Activated CD4-positive, alpha-beta T cell treated with anti-CD3 and anti-CD28 coated beads for 36 hours (primary cell): ENCODE measurements at regions of chr14 and their contacts with region 1.

Region 1: DNA sequence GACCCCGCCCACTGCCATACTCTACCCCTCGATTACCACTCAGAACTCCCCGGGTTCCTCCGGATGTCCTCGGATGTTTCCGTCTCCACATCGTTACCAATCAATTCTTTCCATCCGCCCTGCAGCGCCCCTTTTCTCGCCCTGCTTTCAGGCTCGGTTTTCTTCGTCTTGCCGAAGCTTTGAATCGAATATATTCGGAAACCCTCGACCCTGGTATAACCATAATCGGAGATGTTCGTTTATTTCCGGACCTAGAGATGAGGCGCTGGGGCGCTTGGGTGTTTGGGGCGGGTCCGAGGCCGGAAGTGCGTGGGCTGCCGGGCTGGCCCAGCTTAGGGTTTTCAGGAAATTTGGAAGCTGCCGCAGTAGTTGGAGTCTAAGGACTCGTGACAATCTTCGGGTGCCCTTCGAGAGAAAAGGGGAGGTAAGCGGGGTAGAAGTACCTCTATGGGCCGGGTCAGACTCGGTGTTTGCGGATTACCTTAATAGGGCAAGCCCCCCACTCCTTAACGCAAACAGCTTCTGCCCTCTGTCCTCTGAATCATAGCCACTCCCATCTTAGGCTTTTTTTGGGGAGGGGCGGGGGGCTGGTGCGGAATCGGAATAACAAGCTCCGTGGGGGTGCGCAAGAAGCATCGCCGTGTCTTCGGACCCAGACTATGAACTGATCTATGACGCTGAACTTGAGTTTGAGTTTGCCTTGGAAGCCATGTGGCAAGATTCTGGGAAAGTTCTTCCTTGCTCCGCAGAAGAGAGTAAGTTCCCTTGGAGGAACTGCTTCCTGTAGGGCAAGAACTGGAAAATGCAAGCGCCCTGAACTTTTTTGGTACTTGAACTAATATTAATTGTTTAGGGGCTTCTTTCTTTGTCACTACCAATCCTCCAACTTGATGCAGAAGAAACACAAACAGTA is at the start of gene C14orf119:
- DNase-seq: peak; percentile 100
- ATAC-seq: peak; percentile 93
- H3K4me3 Mint-ChIP-seq: no peak within 1 kb of the TSS
- H3K27ac Mint-ChIP-seq: no peak within 1 kb of the TSS
- H3K4me1 Mint-ChIP-seq: peaks cover 19% of the 10 kb centered on the region
- H3K27me3 Mint-ChIP-seq: no peaks in the 10 kb centered on the region
- total RNA-seq, gene C14orf119: 43.8 to 51.5 TPM

Region 2: GRCh38 chr14:21269252-21270046 is 1826.0 kb before region 1 on chr14 and contains the start of gene HNRNPC:
- CTCF ChIA-PET with region 1: no interaction called
- POLR2A ChIA-PET with region 1: interaction called, 4 read pairs
- intact Hi-C with region 1: loop called in 1 of 2 experiments (anchors 10 kb)
- DNase-seq: peak; percentile 100
- ATAC-seq: peak; percentile 89
- H3K4me3 Mint-ChIP-seq: peak within 1 kb of the TSS; percentile 93
- H3K27ac Mint-ChIP-seq: peak within 1 kb of the TSS; percentile 100
- H3K4me1 Mint-ChIP-seq: peaks cover 25% of the 10 kb centered on the region
- H3K27me3 Mint-ChIP-seq: no peaks in the 10 kb centered on the region
- total RNA-seq, gene HNRNPC: 1,155 to 1,665 TPM

Region 3: GRCh38 chr14:22918804-22919600 is 176.4 kb before region 1 on chr14 and contains the start of gene RBM23:
- CTCF ChIA-PET with region 1: interaction called, 5 read pairs
- POLR2A ChIA-PET with region 1: no interaction called
- intact Hi-C with region 1: loop called in 1 of 2 experiments (anchors 1 kb)
- DNase-seq: peak; percentile 100
- ATAC-seq: peak; percentile 97
- H3K4me3 Mint-ChIP-seq: peak within 1 kb of the TSS; percentile 92
- H3K27ac Mint-ChIP-seq: peak within 1 kb of the TSS; percentile 99
- H3K4me1 Mint-ChIP-seq: peaks cover 40% of the 10 kb centered on the region
- H3K27me3 Mint-ChIP-seq: no peaks in the 10 kb centered on the region
- total RNA-seq, gene RBM23: 61.6 to 68.6 TPM

Region 4: GRCh38 chr14:23006544-23007419 is 88.7 kb before region 1 on chr14:
- CTCF ChIA-PET with region 1: interaction called, 9 read pairs
- POLR2A ChIA-PET with region 1: interaction called, 16 read pairs
- intact Hi-C with region 1: loop called in 1 of 2 experiments (anchors 1 kb)
- DNase-seq: peak; percentile 98
- ATAC-seq: peak; percentile 98
- H3K4me3 Mint-ChIP-seq: peak overlapping the region; percentile 95
- H3K27ac Mint-ChIP-seq: peak overlapping the region; percentile 99
- H3K4me1 Mint-ChIP-seq: peaks cover 45% of the 10 kb centered on the region
- H3K27me3 Mint-ChIP-seq: no peaks in the 10 kb centered on the region

Region 5: GRCh38 chr14:23076785-23077408 is 18.6 kb before region 1 on chr14:
- CTCF ChIA-PET with region 1: interaction called, 58 read pairs
- POLR2A ChIA-PET with region 1: interaction called, 27 read pairs
- intact Hi-C with region 1: no loop called
- DNase-seq: peak; percentile 46
- ATAC-seq: peak; percentile 59
- H3K4me3 Mint-ChIP-seq: no peak overlapping the region
- H3K27ac Mint-ChIP-seq: peak overlapping the region; percentile 17
- H3K4me1 Mint-ChIP-seq: peaks cover 5% of the 10 kb centered on the region
- H3K27me3 Mint-ChIP-seq: no peaks in the 10 kb centered on the region

Region 6: DNA sequence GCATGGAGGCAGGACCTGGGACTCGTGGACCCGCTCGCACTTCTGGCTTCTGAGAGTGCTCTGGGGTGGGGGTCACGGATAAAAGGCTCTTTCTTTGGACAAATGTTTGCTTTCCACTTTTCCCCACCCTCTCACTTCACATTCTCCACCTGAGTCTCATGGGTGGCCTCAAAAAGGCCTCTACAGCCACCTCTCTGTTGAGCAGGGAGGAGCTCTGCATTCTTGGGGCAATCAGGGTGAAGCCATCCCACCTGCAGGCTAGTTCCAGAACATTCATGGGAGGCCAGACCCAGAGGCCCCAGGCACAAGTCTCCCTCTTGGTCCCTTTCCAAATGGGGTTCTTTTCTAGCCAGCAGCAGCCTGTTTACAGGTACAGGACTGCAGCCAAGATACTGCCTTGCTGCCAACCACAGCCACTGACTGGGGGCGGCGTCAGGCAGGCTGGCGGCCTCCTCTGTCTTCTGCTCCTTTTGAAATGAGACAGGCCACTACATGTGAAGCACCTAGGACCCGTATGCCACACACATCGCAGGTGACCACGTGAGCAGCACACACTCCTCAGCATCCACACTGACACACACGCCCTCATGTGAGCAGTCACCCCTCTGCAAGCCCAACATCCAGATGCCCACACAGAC is 41.9 kb after region 1 on chr14:
- CTCF ChIA-PET with region 1: no interaction called
- POLR2A ChIA-PET with region 1: no interaction called
- intact Hi-C with region 1: no loop called
- DNase-seq: no peak
- ATAC-seq: no peak
- H3K4me3 Mint-ChIP-seq: no peak overlapping the region
- H3K27ac Mint-ChIP-seq: no peak overlapping the region
- H3K4me1 Mint-ChIP-seq: no peaks in the 10 kb centered on the region
- H3K27me3 Mint-ChIP-seq: no peaks in the 10 kb centered on the region

Region 7: DNA sequence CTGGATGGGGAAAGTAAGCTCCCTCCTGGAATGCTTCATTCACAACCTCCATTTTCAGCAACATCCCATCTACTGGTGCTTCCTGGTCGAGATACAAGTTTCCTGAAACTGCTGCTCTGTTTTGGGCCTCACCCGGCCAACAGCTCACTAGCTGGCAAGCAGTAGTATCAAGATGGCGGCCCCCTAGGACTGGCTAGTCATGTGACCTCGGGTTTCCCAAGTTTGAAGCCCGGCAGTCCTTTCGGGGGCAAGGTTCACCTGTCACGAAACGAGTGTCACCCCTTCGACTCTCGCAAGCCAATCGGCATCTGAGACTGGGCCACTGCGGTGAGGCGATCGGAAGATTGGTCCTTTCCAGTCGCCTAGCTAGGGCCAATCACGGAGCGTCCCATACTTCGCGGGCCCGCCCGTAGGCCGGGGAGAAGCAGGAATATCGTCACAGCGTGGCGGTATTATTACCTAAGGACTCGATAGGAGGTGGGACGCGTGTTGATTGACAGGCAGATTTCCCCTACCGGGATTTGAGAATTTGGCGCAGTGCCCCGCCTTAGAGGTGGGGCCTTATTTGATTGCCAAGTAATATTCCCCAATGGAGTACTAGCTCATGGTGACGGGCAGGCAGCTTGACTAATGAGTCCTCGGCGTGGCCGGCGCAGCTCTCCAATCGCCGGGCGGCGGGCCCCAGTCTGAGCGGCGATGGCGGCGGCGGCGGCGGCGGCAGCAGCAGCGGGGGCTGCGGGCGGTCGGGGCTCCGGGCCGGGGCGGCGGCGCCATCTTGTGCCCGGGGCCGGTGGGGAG is 225.5 kb after region 1 on chr14 and contains the start of gene PABPN1:
- CTCF ChIA-PET with region 1: interaction called, 3 read pairs
- POLR2A ChIA-PET with region 1: interaction called, 14 read pairs
- intact Hi-C with region 1: loop called in 1 of 2 experiments (anchors 1 kb)
- DNase-seq: peak; percentile 98
- ATAC-seq: peak; percentile 91
- H3K4me3 Mint-ChIP-seq: peak within 1 kb of the TSS; percentile 93
- H3K27ac Mint-ChIP-seq: peak within 1 kb of the TSS; percentile 95
- H3K4me1 Mint-ChIP-seq: peaks cover 25% of the 10 kb centered on the region
- H3K27me3 Mint-ChIP-seq: no peaks in the 10 kb centered on the region
- total RNA-seq, gene PABPN1: 237 to 338 TPM

Region 8: GRCh38 chr14:23569443-23570151 is 474.1 kb after region 1 on chr14:
- CTCF ChIA-PET with region 1: no interaction called
- POLR2A ChIA-PET with region 1: no interaction called
- intact Hi-C with region 1: no loop called
- DNase-seq: no peak
- ATAC-seq: peak; percentile 9
- H3K4me3 Mint-ChIP-seq: no peak overlapping the region
- H3K27ac Mint-ChIP-seq: no peak overlapping the region
- H3K4me1 Mint-ChIP-seq: peaks cover 19% of the 10 kb centered on the region
- H3K27me3 Mint-ChIP-seq: peaks cover 12% of the 10 kb centered on the region

Region 9: DNA sequence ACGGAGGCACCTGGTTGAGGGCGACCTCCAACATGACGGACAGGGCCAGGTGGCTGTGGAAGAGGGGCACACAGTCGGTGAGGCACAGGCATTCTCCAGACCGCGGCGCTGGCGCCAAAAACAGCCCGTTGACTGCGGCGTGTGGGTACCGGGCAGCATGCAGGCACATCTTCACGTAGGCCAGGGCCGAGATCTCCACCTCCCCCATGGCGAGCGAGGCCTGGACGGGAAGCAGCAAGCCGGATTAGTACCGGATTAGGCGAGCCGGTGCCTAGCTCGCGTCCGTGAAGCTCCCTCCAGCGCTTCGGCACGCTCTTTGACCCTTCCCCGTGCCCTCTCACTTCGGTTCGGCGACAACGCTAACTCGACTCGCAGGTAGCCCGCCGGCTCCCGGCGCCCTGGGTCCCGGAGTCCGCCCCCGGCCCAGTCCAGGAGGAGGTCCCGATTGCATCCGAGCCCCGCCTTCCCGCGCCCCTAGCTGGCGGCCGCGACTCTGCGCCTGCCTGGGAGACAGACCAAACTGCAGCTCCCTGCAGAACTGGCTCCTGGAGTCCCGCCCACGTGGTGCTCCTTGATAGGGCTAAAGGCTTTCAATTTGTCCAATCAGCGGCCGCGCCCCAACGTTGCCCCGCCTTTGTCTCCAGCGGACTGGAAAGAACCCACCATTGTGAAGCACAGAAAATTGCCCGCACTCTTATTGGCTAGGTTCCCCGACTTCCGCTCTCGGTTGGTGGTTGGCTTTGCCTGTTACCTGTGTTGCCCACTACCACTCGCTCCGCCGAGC is 1045.8 kb after region 1 on chr14 and contains the start of gene EMC9:
- CTCF ChIA-PET with region 1: no interaction called
- POLR2A ChIA-PET with region 1: no interaction called
- intact Hi-C with region 1: loop called in 1 of 2 experiments (anchors 10 kb)
- DNase-seq: peak; percentile 100
- ATAC-seq: peak; percentile 87
- H3K4me3 Mint-ChIP-seq: peak within 1 kb of the TSS; percentile 88
- H3K27ac Mint-ChIP-seq: peak within 1 kb of the TSS; percentile 97
- H3K4me1 Mint-ChIP-seq: peaks cover 66% of the 10 kb centered on the region
- H3K27me3 Mint-ChIP-seq: no peaks in the 10 kb centered on the region
- total RNA-seq, gene EMC9: 36.9 to 46.7 TPM